ENCODE measurements at regions of chr6 and their contacts with region 1.

Region 1: DNA sequence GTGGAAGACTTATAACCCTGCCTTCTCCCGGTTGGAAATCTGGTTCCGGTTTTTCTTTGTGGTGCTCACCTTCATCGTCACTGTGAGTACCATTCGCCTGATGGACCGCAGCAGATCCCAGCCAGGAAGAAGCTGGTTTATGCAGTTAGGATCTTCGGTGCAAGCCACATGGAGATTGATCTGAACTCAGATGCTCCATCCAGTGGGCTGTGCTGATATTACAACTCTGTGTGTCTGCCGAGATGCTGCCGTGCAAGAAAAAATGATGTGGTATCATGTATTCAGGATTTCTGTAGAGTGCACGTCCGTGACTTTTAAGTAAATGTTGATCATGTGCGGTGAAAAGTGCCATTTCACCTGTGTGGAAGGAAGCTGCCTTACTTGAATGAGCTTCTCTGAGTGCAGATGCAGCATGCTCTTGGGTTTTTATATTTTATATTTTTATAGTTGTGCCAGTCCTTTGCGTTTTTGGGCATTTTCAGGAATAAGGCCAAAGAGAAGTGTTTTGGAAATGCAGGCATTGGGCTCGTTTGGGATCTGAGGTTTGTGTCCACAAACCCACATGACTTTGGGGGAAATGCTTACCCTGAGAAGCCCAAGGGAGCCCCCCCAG is 39.2 kb downstream of the DYNLT1 start:
- DNase-seq: peak; percentile 53
- H3K4me3 ChIP-seq: no peak overlapping the region
- H3K27ac ChIP-seq: no peak overlapping the region
- H3K4me1 ChIP-seq: no peaks in the 10 kb centered on the region
- H3K27me3 ChIP-seq: no peaks in the 10 kb centered on the region
- CTCF ChIP-seq: peak; percentile 78

Region 2: DNA sequence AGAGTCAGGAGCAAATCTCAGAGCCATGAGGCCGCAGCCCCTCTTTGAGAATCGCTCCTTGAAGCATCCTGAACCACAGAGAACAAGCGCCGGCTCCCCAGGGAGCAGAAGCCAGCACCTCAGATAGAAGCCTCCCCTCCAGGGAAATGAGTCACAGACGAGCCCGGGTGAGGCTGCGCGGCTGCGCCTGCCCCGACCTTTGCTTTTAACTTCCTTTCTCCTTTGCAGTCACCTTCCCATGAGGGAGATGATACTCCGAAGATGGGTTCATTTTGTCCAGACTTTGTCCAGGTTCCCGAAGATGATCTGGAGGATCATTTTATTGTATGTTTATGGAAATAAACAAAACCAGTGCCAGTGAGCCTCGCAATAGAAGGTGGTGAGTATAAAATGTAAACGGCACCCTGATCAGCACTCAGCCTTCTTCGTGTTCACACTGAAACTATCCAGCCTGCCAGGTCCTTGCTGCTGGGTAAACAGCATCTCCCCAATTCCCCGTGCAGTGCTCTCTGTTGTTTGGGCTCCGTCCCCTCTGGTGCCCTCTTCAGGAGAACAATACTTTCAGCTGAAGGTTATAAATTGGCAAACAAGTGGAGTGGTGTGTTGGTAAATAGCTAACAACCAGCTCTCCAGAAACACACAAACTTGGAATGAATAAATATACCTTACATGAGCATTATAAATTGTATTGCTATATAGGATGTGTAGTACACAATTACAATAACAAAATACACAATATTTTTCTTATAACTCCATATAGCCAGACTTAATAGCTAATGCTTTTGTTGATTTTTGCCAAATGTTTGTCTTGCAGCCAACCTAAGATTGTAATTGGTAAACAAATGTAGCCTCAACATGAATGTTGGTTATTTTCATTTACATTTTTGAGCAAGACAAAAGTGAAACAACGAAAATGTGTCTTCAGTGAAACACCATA is 86.9 kb before region 1 on chr6:
- CTCF ChIA-PET with region 1: interaction called, 3 read pairs
- dilution Hi-C with region 1: no loop called
- in situ Hi-C with region 1: no loop called
- intact Hi-C with region 1: loop called (anchors 2 kb)
- DNase-seq: peak; percentile 79
- H3K4me3 ChIP-seq: peak overlapping the region; percentile 43 to 50 (median 43)
- H3K27ac ChIP-seq: peak overlapping the region; percentile 69
- H3K4me1 ChIP-seq: peaks cover 6% of the 10 kb centered on the region
- H3K27me3 ChIP-seq: no peaks in the 10 kb centered on the region
- CTCF ChIP-seq: peak; percentile 42 to 75

Region 3: DNA sequence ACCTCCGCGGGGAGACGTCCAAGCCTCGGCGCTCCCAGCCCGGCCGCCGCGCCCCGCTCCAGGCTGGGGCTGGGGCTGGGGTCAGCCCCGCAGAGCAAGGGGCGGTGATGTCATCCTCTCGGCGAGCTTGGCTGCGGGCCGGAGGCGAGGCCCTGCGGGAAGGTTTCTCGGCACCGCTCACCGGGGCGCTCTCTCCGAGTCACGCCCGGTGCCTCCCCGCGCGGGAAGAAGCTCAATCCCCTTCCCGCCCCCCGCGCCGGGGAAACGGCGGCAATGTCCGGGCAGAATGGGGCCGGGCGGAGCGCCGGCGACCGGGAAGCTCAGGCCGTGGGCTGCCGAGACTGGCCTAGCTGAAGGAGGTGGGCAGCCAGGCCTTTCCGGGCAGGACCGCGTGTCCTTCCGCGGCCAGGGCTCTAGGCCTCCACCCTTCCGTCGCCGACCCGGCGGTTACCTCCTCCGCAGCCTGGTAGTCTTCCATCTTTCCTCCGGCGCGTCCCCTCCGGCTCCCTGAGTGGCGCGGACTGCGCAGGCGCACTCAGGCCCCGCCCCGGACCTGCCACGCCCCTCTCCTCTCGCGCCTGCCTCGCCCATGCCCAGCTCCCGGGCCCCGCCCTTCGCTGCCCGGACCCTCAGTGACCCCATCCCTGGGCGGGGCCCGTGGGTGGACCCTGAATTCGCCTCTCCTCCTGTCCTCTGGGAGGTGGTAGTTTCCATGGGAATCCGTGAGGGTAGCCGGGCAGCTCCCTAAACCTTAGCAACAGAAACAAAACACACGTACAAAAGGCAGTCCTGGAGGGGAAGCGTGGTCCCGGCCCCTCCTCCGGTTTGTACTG is 39.1 kb after region 1 on chr6 and contains the start of gene DYNLT1:
- CTCF ChIA-PET with region 1: interaction called, 12 read pairs
- dilution Hi-C with region 1: no loop called
- in situ Hi-C with region 1: no loop called
- intact Hi-C with region 1: no loop called
- DNase-seq: peak; percentile 97
- H3K4me3 ChIP-seq: peak within 1 kb of the TSS; percentile 59 to 98 (median 77)
- H3K27ac ChIP-seq: peak within 1 kb of the TSS; percentile 97
- H3K4me1 ChIP-seq: peaks cover 47% of the 10 kb centered on the region
- H3K27me3 ChIP-seq: no peaks in the 10 kb centered on the region
- CTCF ChIP-seq: no peak
- total RNA-seq, gene DYNLT1: 51.8 to 129 TPM